ENCODE measurements at regions of chr3 and their contacts with region 1.

Region 1: DNA sequence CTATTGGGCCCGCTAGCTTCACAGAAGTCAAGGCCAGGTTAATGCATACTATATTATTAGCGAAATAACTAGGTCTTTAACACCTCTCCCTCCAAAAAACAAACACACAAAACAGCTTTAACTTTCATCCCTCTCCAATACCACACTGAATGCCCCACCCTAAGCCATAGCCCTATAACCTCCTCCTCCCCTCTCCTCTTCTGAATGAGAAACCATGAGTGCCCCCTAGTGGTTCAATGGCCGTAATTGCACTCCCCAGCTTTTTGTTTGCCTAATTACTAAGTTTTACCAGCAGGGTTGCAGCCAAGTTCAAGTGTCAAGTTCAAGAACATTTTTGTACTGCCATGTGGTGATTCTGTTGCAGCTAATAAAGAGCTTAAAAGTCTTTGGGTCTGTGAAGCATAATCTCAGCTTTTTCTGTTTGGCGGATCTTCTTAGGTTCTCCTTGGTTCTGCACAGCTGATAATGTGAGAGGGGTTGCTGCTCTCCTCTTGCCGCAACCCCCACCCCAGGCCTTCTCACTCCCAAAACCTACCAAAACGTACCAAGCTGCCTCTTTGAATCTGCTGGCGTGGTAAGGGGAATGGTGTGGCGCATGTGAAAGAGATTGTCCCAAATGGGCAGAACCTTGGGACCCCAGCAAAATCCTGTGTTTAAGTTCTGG is 57.9 kb downstream of the RPL22L1 start:
- DNase-seq: peak; percentile 76
- H3K4me3 ChIP-seq: no peak overlapping the region
- CTCF ChIP-seq: peak; percentile 93

Region 2: GRCh38 chr3:170429050-170429449 is 383.0 kb before region 1 on chr3:
- in situ Hi-C with region 1: loop called (anchors 5 kb)
- DNase-seq: peak; percentile 90
- H3K4me3 ChIP-seq: no peak overlapping the region
- CTCF ChIP-seq: no peak

Region 3: DNA sequence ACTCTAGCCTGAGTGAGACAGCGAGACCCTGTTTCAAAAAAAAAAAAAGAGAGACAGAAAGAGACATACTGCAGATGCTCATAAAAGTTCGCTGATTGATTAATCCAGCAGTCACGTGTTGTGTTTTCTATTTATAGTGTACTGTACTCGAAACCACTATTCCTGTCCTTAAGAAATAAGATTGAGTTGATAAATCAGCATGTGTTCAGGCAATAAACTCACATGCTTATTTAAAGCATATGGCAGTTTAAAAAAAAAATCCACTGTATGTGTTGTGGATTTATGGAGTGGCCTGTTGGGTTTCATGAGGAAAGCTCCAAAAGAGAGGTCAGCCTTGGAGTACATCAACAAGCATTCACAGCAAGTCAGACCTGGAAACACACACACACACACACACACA is 40.3 kb after region 1 on chr3:
- in situ Hi-C with region 1: loop called (anchors 5 kb)
- DNase-seq: no peak
- H3K4me3 ChIP-seq: no peak overlapping the region
- CTCF ChIP-seq: no peak